IMR-90 (cell line): ENCODE measurements at regions of chr11 and their contacts with region 1.

Region 1: DNA sequence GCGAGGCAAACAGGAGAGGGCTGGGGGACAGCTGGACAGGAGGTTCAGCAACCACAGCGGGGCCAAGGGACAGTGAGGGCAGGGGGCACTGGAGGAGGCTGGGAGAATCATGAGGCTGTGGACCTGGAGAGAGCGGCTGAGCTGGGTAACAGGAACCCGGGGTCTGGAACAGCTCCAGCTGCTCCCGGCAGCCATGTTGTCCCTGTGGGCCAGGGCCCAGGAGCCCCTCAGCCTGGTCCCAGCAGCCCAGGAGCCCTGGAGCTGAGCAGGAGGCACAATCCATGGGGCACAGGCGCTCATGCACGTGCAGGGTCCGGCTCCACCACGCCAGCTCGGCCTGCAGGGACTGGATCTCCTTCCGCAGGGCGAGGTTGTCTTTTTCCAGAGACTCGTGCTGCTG is 7.4 kb downstream of the BATF2 start:
- DNase-seq: no peak
- ATAC-seq: no peak
- H3K4me3 ChIP-seq: no peak overlapping the region
- H3K27ac ChIP-seq: no peak overlapping the region
- H3K4me1 ChIP-seq: no peaks in the 10 kb centered on the region
- H3K27me3 ChIP-seq: no peaks in the 10 kb centered on the region; the same call in 1 of the 2 replicates
- CTCF ChIP-seq: no peak
- POLR2A ChIP-seq: no peak
- RAD21 ChIP-seq: no peak

Region 2: DNA sequence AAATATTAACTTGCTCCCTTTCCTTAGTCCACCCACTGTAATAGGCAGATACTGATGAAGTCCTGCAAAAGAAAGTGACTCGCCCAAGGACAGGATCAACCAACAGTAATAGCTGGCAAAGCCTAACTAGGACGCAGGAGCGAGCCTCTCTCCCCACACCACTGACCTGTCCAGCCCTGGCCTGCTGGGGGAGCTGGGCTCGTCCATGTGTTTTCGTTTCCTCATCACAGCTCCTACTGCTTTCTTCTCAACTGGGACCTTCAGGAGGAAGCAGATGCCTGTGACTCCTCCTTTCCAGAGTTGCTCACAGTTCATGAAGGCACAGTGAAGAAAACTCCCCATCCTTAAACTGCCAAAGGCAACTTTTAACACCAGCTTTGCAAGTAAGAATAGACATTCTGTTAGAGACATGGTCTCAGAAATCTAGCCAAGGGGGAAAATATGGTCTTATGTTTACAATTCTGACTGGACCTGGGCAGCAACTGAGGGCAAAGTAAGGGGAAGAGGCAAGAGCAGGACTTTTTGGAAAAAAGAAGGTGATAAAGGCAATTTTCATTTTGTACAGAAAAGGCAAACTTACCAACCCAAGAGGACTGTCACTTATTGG is 42.1 kb before region 1 on chr11:
- CTCF ChIA-PET with region 1: no interaction called
- POLR2A ChIA-PET with region 1: no interaction called
- dilution Hi-C with region 1: no loop called
- in situ Hi-C with region 1: no loop called
- intact Hi-C with region 1: loop called (anchors 5 kb)
- DNase-seq: no peak
- ATAC-seq: no peak; the same call in 1 of the 2 replicates
- H3K4me3 ChIP-seq: no peak overlapping the region
- H3K27ac ChIP-seq: no peak overlapping the region
- H3K4me1 ChIP-seq: no peaks in the 10 kb centered on the region
- H3K27me3 ChIP-seq: peaks cover 33% of the 10 kb centered on the region
- CTCF ChIP-seq: no peak
- POLR2A ChIP-seq: no peak
- RAD21 ChIP-seq: no peak